Gastrocnemius medialis (tissue), 4 donors: ENCODE measurements at regions of chr10 and their contacts with region 1.

Region 1: GRCh38 chr10:121608469-121609190 is 10.4 kb upstream of the FGFR2 start:
- DNase-seq: no peak
- ATAC-seq: no peak
- H3K4me3 ChIP-seq: peak overlapping the region in 2 of 4 donors; percentile 16 to 28
- H3K27ac ChIP-seq: no peak overlapping the region
- H3K4me1 ChIP-seq: no peaks in the 10 kb centered on the region
- H3K27me3 ChIP-seq: peaks cover 15 to 17% (median 16%) of the 10 kb centered on the region in 3 donors
- CTCF ChIP-seq: peak; percentile 36 to 68 (median 58)
- POLR2A ChIP-seq: no peak

Region 2: DNA sequence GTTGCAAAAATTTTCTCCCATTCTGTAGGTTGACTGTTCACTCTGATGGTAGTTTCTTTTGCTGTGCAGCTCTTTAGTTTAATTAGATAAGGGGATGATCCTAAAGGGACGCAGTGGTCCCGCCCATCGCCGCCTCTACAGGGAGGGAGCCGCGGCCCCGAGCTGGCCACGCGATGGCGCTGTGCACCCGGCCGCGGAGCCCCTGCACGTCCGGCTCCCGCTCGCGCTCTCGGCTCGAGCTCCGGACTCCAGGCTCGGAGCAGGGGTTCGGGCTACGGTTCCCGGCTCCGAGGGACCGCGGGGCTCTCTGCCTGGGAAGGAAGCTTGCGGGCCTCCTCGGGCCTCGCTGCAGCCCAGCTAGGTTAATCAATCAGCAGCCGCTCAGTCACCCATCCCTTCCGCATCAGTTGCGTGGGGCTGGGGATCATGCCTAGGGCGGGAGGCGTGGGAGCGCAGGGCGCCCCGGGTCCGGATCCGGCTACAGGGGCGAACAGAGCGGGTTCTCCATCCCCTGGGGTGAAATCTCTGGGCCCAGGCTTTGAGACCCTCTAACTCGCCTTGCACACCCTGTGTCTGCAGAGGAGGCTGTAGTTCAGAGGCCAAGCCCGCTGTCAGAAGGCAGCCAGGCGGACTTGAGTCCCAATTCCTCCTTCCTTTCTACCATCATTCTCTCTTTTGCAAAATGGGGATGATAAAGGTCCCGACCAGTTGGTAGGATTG is 659.6 kb before region 1 on chr10:
- in situ Hi-C with region 1: loop called (anchors 5 to 25 kb)
- intact Hi-C with region 1: loop called (anchors 5 kb)
- DNase-seq: no peak
- ATAC-seq: peak in 1 of 2 donors; percentile 55
- H3K4me3 ChIP-seq: peak overlapping the region; percentile 35 to 58 (median 42)
- H3K27ac ChIP-seq: no peak overlapping the region
- H3K4me1 ChIP-seq: no peaks in the 10 kb centered on the region
- H3K27me3 ChIP-seq: peaks cover 22 to 37% (median 29%) of the 10 kb centered on the region in 3 donors
- CTCF ChIP-seq: peak; percentile 42 to 70 (median 55)
- POLR2A ChIP-seq: no peak

Region 3: DNA sequence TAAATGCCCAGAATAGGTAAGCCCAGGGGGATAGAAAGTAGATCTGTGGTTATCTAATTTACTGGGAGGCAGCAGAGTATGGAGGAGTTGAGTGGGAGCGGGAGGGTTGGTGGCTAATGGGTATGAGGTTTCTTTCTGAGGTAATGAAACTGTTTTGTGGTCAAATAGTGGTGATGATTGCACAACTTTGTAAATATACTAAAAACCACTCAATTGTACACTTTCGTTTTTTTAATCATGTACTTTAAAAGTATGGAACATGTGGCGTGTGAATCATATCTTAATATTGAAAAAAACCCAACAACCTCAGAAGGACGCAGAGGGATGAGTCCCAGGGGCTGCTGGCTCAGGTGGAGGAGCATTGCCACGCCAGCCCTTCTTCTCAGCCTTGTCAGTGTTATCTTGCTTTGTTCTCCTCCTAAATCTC is 639.4 kb before region 1 on chr10:
- in situ Hi-C with region 1: loop called in 1 of 4 experiments (anchors 25 kb)
- intact Hi-C with region 1: no loop called
- DNase-seq: no peak
- ATAC-seq: no peak
- H3K4me3 ChIP-seq: no peak overlapping the region
- H3K27ac ChIP-seq: no peak overlapping the region
- H3K4me1 ChIP-seq: no peaks in the 10 kb centered on the region
- H3K27me3 ChIP-seq: peaks cover 0 to 6% (median 3%) of the 10 kb centered on the region in 3 donors
- CTCF ChIP-seq: no peak
- POLR2A ChIP-seq: no peak

Region 4: DNA sequence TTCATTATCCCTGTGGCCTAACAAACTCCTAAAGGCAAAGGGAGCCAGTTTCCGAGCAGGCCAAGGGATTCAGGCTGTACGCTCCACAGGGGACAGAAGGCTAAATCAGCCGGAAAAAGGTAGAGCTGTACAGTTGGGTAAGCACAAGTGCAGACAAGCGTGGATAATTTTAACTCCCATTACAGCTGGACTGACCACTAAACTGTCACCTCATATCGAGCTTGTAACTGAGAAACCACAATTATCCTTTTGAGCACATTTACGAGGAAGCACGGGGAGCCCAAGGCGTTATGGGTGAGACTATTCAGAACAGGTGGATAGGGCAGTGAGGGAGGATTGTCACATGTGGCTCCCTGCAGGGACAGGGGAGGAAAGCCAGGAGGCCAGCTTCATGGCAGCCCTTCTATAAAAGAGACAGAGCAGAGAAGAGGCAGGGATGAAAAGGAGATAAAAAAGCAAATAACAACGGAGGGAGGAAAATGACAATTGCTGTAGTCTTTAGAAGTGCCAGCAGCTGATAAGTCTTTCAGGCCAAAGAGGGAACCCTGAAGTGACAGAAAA is 298.4 kb before region 1 on chr10:
- in situ Hi-C with region 1: no loop called
- intact Hi-C with region 1: no loop called
- DNase-seq: no peak
- ATAC-seq: no peak
- H3K4me3 ChIP-seq: no peak overlapping the region
- H3K27ac ChIP-seq: no peak overlapping the region
- H3K4me1 ChIP-seq: no peaks in the 10 kb centered on the region
- H3K27me3 ChIP-seq: no peaks in the 10 kb centered on the region
- CTCF ChIP-seq: no peak
- POLR2A ChIP-seq: no peak

Region 5: DNA sequence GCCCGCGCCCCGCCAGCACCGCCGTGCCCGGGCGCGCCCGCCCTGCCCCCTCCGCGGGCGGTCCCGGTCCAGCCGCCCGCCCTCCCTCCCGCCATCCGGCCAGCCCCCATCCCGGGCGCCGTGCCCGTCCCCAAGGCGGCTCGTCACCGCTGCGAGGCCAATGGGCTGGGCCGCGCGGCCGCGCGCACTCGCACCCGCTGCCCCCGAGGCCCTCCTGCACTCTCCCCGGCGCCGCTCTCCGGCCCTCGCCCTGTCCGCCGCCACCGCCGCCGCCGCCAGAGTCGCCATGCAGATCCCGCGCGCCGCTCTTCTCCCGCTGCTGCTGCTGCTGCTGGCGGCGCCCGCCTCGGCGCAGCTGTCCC is 852.7 kb after region 1 on chr10 and contains the start of gene HTRA1:
- in situ Hi-C with region 1: no loop called
- intact Hi-C with region 1: no loop called
- DNase-seq: peak; percentile 38 to 41
- ATAC-seq: peak; percentile 22 to 48
- H3K4me3 ChIP-seq: peak within 1 kb of the TSS; percentile 68 to 79 (median 72)
- H3K27ac ChIP-seq: peak within 1 kb of the TSS; percentile 69 to 73 (median 70)
- H3K4me1 ChIP-seq: peaks cover 21 to 28% of the 10 kb centered on the region in 2 donors
- H3K27me3 ChIP-seq: no peaks in the 10 kb centered on the region
- CTCF ChIP-seq: no peak
- POLR2A ChIP-seq: peak; percentile 42 to 44
- total RNA-seq, gene HTRA1: 14.2 to 23.2 (median 17.2) TPM